Caco-2 (cell line): ENCODE measurements at regions of chr22 and their contacts with region 1.

Region 1: GRCh38 chr22:22692707-22693530 is 48.5 kb downstream of the GGTLC2 start:
- DNase-seq: peak; percentile 83 to 91
- H3K4me3 ChIP-seq: no peak overlapping the region
- H3K4me3 Mint-ChIP-seq: peak overlapping the region; percentile 21
- H3K27ac Mint-ChIP-seq: peak overlapping the region; percentile 58
- H3K4me1 ChIP-seq: peaks cover 10% of the 10 kb centered on the region
- H3K4me1 Mint-ChIP-seq: peaks cover 16% of the 10 kb centered on the region
- H3K27me3 ChIP-seq: no peaks in the 10 kb centered on the region
- H3K27me3 Mint-ChIP-seq: no peaks in the 10 kb centered on the region
- CTCF ChIP-seq: peak; percentile 87 to 98

Region 2: DNA sequence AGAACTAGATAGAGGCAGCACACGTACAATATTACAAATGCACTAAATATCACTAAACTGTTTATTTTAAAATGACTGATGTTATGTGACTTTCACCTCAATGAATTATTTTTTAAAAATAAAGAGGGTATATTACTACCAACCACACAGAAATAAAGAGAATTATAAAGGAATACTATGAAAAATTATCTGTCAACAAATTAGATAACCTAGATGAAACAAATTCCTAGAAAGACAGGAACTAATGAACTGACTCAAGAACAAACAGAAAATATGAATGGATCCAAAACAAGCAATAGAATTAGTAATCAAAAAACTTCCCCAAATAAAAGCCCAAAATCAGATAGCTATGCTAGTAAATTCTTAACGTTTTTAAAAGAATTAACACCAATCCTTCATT is 194.7 kb before region 1 on chr22:
- CTCF ChIA-PET with region 1: no interaction called
- POLR2A ChIA-PET with region 1: no interaction called
- intact Hi-C with region 1: no loop called
- DNase-seq: no peak
- H3K4me3 ChIP-seq: no peak overlapping the region
- H3K4me3 Mint-ChIP-seq: no peak overlapping the region
- H3K27ac Mint-ChIP-seq: no peak overlapping the region
- H3K4me1 ChIP-seq: no peaks in the 10 kb centered on the region
- H3K4me1 Mint-ChIP-seq: no peaks in the 10 kb centered on the region
- H3K27me3 ChIP-seq: no peaks in the 10 kb centered on the region
- H3K27me3 Mint-ChIP-seq: no peaks in the 10 kb centered on the region
- CTCF ChIP-seq: no peak

Region 3: DNA sequence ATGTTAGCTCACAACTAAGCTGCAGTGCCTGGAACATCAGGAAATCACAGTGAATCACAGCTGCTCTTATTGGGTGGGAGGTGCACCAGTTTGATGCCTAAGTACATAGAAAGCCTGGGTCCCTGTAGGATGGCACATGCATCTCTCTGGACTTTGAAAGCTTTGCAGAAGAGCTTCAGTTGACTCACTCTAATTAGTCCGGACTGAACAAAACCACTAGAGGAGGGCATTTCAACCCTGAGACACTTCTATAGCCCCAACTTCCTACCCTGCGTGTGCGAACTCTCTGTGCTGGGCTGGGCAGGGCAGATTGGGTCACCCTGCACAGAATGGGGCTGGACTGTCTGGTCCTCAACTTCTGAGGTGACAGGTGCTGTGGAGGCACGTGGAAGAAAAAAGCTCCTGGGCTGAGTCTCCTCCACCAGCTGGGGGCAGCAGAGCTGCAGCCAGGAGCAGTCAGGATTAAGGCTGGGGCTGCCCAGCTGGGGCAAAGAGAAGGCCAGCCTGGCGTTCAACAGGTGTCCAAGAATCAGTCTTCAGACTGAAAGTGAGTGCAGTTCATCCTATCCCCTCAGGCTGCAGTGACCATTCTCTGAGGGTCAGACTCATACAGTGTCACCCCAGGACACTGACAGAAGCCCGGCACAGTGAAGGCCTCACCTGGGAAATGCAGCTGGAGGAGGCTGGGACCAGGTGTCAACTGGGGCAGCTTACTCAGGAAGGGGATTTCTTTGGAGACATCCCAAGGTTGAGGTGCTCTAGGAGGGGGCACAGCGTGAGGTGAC is 26.4 kb before region 1 on chr22:
- CTCF ChIA-PET with region 1: interaction called, 17 read pairs
- POLR2A ChIA-PET with region 1: no interaction called
- intact Hi-C with region 1: no loop called
- DNase-seq: peak; percentile 71 to 75
- H3K4me3 ChIP-seq: no peak overlapping the region
- H3K4me3 Mint-ChIP-seq: no peak overlapping the region
- H3K27ac Mint-ChIP-seq: no peak overlapping the region
- H3K4me1 ChIP-seq: no peaks in the 10 kb centered on the region
- H3K4me1 Mint-ChIP-seq: no peaks in the 10 kb centered on the region
- H3K27me3 ChIP-seq: no peaks in the 10 kb centered on the region
- H3K27me3 Mint-ChIP-seq: peaks cover 2% of the 10 kb centered on the region
- CTCF ChIP-seq: peak; percentile 53 to 79

Region 4: DNA sequence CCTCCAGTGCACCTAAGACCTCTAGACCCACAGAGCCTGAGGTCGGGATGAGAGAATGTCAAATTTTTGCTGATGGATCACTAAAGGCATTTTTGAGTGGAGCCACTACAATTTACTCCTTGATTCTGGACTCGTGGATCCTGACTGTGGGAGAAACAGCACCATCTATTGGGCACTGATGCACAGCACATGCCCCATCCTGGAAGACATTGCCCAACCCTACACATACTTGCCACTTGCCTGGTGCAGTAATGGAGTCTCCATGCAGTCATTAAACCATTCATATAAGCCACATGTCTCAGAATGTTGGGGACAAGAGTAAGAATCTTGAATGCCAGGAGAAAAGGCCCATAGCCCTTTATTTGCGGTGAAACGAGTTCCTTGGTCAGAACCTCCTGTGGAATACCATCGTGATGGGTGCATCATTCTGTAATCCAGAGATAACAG is 55.4 kb after region 1 on chr22:
- CTCF ChIA-PET with region 1: no interaction called
- POLR2A ChIA-PET with region 1: no interaction called
- intact Hi-C with region 1: loop called (anchors 2 kb)
- DNase-seq: peak in 1 of 2 experiments; percentile 60
- H3K4me3 ChIP-seq: no peak overlapping the region
- H3K4me3 Mint-ChIP-seq: no peak overlapping the region
- H3K27ac Mint-ChIP-seq: no peak overlapping the region
- H3K4me1 ChIP-seq: no peaks in the 10 kb centered on the region
- H3K4me1 Mint-ChIP-seq: no peaks in the 10 kb centered on the region
- H3K27me3 ChIP-seq: no peaks in the 10 kb centered on the region; the same call in none of the 2 replicates
- H3K27me3 Mint-ChIP-seq: peaks cover 4% of the 10 kb centered on the region
- CTCF ChIP-seq: peak; percentile 69 to 74

Region 5: GRCh38 chr22:23142546-23143105 is 449.7 kb after region 1 on chr22:
- CTCF ChIA-PET with region 1: interaction called, 14 read pairs
- POLR2A ChIA-PET with region 1: no interaction called
- intact Hi-C with region 1: no loop called
- DNase-seq: no peak
- H3K4me3 ChIP-seq: no peak overlapping the region
- H3K4me3 Mint-ChIP-seq: peak overlapping the region; percentile 70
- H3K27ac Mint-ChIP-seq: peak overlapping the region; percentile 94
- H3K4me1 ChIP-seq: peaks cover 28% of the 10 kb centered on the region
- H3K4me1 Mint-ChIP-seq: peaks cover 22% of the 10 kb centered on the region
- H3K27me3 ChIP-seq: no peaks in the 10 kb centered on the region
- H3K27me3 Mint-ChIP-seq: no peaks in the 10 kb centered on the region
- CTCF ChIP-seq: no peak